Mammary epithelial cell (primary cell): ENCODE measurements at regions of chr13 and their contacts with region 1.

Region 1: DNA sequence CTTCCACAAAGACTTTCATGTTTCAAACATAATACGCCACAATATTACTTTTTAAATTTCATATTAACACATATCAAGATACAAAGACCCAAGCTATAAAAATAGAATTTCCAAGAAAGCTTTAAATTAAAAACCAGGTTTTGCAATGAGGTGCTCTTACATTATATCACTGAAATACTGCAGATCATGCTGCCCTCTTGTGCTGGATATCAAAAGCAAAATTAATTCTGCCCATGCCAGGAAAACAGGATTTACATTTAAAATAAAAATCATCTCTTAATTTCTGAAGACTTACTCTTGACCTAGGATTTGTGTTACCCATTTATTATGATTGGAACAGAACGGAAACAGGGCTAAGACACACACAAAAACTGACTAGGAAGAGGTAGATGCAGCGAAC is 145.0 kb downstream of the ABCC4 start:
- DNase-seq: no peak
- H3K4me3 ChIP-seq: no peak overlapping the region
- H3K27ac ChIP-seq: no peak overlapping the region
- H3K4me1 ChIP-seq: no peaks in the 10 kb centered on the region
- H3K27me3 ChIP-seq: no peaks in the 10 kb centered on the region
- CTCF ChIP-seq: peak in 1 of 2 donors; percentile 53

Region 2: DNA sequence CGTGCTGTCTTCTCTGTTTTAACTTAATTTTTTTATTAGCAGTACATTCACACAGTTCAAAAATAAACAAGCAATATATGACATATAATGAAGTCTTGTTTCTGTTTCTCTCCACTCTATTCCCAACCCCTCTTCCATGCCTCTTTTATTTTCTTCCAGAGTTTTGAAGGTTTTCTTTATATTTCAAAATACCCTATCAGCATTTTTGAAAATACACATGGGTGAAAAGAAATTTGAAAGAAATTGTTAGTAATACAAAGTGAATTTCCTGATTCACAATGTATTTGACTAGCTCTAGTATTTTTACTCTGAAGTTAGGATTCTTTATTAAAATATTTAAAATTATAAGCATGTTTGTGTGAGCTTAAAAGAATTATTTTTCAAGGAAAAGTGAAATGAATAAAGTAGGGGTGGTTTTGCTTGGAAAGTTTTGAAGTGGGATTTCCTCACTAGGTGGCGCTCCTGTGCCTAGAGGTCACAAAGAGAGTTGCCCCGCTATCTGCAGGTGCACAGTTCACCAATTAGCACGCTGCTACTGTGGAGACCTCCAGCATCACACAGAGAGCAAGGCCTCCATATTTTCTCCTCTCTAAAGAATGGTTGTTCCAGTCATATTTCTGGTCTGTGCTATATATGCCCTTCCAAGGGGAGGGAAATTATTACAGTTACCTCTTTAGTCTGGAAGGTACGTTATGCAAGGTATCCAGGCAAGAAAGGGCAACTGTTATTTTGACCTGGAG is 481.4 kb before region 1 on chr13:
- CTCF ChIA-PET with region 1: interaction called, 3 read pairs
- dilution Hi-C with region 1: no loop called
- in situ Hi-C with region 1: loop called (anchors 25 kb)
- intact Hi-C with region 1: loop called (anchors 2 kb)
- DNase-seq: peak; percentile 24
- H3K4me3 ChIP-seq: no peak overlapping the region
- H3K27ac ChIP-seq: no peak overlapping the region
- H3K4me1 ChIP-seq: no peaks in the 10 kb centered on the region
- H3K27me3 ChIP-seq: peaks cover 2% of the 10 kb centered on the region
- CTCF ChIP-seq: peak; percentile 73 to 86

Region 3: DNA sequence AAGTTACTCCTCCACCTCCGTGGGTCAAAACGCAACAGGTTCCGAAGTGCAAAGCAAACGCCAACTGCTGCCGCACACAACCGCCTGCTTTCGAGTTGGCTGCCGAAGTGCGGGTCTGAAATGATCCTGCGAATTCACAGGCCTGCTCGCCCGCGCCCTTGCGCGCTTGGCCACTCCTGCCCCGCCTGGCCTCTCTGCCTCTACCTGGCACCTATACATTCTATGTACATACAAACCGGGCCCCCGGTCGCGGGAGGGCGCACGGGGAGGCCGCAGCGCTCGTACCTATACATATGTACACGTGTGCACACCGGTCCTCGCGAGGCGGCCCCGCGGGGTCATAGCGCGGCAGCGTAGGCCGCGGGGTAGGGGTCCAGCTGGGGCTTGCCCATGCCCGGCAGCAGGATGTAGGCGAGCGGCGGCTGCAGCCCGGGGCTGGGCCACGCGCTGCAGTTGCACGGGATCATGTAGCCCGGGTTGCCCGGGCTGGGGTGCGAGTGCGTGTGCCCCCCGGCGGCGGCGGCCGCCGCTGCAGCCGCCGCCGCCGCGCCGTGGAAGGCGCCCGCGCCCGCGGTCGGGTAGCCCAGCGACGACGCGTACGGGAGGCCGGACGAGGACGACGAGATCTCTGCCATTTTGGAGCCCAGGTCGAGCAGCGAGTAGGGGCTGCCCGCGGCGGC is 445.2 kb before region 1 on chr13:
- CTCF ChIA-PET with region 1: no interaction called
- dilution Hi-C with region 1: no loop called
- in situ Hi-C with region 1: no loop called
- intact Hi-C with region 1: loop called (anchors 10 kb)
- DNase-seq: no peak
- H3K4me3 ChIP-seq: peak overlapping the region in 1 of 3 experiments; percentile 26
- H3K27ac ChIP-seq: no peak overlapping the region
- H3K4me1 ChIP-seq: peaks cover 20% of the 10 kb centered on the region
- H3K27me3 ChIP-seq: peaks cover 64% of the 10 kb centered on the region
- CTCF ChIP-seq: no peak

Region 4: GRCh38 chr13:95023405-95023804 is 132.8 kb before region 1 on chr13:
- CTCF ChIA-PET with region 1: no interaction called
- dilution Hi-C with region 1: no loop called
- in situ Hi-C with region 1: no loop called
- intact Hi-C with region 1: no loop called
- DNase-seq: peak; percentile 40
- H3K4me3 ChIP-seq: no peak overlapping the region
- H3K27ac ChIP-seq: no peak overlapping the region
- H3K4me1 ChIP-seq: peaks cover 19% of the 10 kb centered on the region
- H3K27me3 ChIP-seq: no peaks in the 10 kb centered on the region
- CTCF ChIP-seq: no peak